ENCODE measurements at regions of chr21 and their contacts with region 1.

Region 1: DNA sequence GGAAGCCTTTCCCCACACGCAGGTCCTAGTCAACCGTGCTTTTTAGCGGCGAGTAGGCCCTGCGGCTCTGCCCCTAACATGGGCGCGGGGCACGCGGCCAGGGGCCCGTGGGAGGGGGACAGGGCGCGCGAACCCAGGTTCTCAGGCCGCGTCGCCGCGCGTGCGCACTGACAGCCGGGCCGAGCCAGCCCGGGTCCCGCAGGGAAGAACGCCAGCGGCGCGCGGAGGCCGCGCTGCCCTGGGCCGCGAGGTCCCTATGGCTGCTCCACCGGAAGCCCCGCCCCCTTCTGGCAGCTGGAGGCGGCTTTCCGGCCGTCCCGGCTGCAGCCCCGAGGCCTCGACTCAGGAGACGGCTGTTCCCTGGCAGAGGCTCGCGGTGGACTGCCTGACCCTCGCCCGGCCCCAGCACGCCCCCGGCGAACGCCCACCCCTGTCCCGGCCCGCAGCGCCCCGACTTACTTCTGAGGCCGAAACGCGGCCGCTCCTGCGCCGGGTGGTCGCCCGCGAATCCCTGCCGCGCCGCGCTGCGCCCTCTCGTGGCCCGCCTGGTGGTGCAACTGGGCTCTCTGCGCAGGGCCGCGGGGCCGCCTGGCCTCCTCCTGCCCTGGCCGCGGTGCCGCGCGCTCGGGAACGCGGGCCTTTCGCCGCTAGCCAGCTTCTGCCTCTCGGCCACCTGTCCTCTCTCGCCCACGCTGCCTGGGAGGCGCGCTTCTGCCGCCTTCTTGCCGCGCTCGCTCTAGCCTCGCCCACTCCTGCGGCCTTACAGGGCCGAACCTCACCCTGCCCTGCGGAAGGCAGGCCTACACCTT is 16.6 kb upstream of the RIPPLY3 start:
- DNase-seq: peak; percentile 90
- ATAC-seq: peak; percentile 98
- H3K4me3 ChIP-seq: peak overlapping the region; percentile 44
- H3K27ac ChIP-seq: peak overlapping the region; percentile 80
- H3K4me1 ChIP-seq: peaks cover 6% of the 10 kb centered on the region; the same call in 1 of the 2 replicates
- H3K27me3 ChIP-seq: no peaks in the 10 kb centered on the region; the same call in 1 of the 2 replicates
- CTCF ChIP-seq: peak; percentile 78
- POLR2A ChIP-seq: no peak
- RAD21 ChIP-seq: peak; percentile 44

Region 2: DNA sequence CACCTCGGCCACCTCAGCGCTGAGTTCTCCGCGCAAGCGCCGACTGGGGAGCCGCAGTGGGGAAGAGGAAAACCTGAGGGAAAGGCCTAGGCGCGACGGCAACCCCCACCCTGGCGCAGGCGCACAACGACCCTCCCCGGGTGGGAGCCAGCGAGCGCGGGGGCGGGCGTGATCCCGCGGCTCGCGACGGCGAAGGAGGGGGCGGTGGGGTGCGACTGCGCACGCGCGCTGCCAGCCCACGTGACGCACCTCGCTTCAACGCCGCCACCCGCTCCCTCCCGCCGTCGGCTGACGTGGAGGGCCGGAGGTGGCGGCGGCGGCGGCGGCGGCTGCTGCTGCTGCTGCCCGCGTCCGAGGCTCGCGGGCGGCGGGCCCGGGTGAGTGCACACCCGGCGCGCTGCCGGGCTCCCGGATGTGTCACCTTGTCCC is 83.1 kb after region 1 on chr21 and contains the starts of genes PIGP and TTC3:
- CTCF ChIA-PET with region 1: interaction called, 3 read pairs
- POLR2A ChIA-PET with region 1: no interaction called
- dilution Hi-C with region 1: no loop called
- in situ Hi-C with region 1: no loop called
- intact Hi-C with region 1: loop called (anchors 2 kb)
- DNase-seq: peak; percentile 93
- ATAC-seq: peak; percentile 83
- H3K4me3 ChIP-seq: peak within 1 kb of the TSS; percentile 92
- H3K27ac ChIP-seq: peak within 1 kb of the TSS; percentile 93
- H3K4me1 ChIP-seq: peaks cover 9% of the 10 kb centered on the region
- H3K27me3 ChIP-seq: no peaks in the 10 kb centered on the region
- CTCF ChIP-seq: no peak
- POLR2A ChIP-seq: peak; percentile 54; the same call in 1 of the 2 replicates
- RAD21 ChIP-seq: no peak
- total RNA-seq, gene PIGP: 4.1 and 5.6 TPM in 2 replicates
- total RNA-seq, gene TTC3: 293 and 332 TPM in 2 replicates

Region 3: DNA sequence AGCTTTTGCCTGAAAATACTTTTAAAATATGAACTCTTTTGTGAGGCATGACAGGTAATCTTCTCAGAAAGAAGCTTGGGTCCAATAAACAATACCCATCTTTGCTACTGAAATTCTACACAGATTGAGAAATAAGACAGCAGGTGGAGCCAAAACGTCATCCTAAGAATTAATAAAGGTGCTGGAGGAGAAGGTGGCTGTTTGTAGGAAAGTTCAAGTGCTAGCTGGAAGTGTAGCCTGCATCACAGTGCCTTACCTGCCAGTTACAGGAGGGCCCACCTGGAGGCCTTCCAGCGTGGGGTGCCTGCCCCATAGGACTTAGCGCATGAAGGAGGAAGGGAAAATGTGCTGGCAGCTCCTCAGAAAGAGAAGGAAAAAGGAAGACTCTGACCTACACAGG is 176.8 kb after region 1 on chr21:
- CTCF ChIA-PET with region 1: no interaction called
- POLR2A ChIA-PET with region 1: no interaction called
- dilution Hi-C with region 1: no loop called
- in situ Hi-C with region 1: no loop called
- intact Hi-C with region 1: no loop called
- DNase-seq: no peak
- ATAC-seq: no peak
- H3K4me3 ChIP-seq: no peak overlapping the region
- H3K27ac ChIP-seq: no peak overlapping the region
- H3K4me1 ChIP-seq: peaks cover under 1% of the 10 kb centered on the region
- H3K27me3 ChIP-seq: no peaks in the 10 kb centered on the region
- CTCF ChIP-seq: 0 out of 2 replicates have a peak, but pooled peaks have one; percentile 11
- POLR2A ChIP-seq: no peak
- RAD21 ChIP-seq: no peak

Measured in IMR-90 (cell line).